Motor neuron (in vitro differentiated cells): ENCODE measurements at regions of chr10 and their contacts with region 1.

Region 1: DNA sequence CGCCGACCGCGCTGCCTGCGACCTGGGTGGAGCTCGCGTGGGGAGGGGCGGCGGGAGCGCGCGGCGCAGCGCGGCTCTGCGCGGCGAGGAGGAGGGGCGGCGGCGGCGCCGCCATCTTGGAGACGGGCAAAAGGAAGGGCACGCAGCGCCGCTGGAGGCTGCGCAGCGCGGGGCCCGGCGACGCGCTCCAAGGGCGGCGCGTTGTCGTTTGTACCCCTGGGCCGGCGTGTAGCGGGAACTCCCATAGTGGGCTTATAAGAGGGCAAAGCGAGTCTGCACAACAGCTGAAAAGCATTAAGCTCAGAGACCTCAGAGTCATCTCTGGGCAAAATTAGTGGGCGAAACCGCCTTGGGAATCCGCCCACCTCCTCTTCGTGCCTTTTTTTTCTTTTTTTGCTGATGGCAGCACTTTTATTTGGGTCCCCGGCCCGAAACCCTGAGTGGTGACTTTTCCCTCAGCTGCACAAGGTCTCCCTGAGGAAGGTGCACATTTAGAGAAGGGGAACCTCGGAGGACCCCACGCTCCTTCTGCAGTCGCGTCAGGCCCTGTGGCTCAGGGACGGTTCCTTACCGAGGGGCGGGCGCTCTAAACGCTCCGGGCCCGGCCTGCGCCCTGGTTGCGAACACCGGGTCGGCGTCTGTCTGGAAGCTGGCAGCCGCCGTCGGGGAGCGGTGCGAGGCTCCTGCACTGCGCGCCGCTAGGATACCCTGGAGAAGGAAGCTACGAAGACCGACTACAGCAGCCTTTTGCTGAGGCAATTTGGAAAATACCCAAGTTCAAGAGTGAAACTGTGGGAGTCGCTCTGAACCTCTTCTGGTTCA is 428 bp upstream of the MCMBP start:
- ATAC-seq: peak; percentile 87 to 95 (median 93)
- H3K4me3 ChIP-seq: peak overlapping the region; percentile 74 to 89 (median 86)
- H3K27ac ChIP-seq: peak overlapping the region; percentile 76 to 88
- H3K4me1 ChIP-seq: peaks cover 11 to 25% of the 10 kb centered on the region in 2 donors

Region 2: DNA sequence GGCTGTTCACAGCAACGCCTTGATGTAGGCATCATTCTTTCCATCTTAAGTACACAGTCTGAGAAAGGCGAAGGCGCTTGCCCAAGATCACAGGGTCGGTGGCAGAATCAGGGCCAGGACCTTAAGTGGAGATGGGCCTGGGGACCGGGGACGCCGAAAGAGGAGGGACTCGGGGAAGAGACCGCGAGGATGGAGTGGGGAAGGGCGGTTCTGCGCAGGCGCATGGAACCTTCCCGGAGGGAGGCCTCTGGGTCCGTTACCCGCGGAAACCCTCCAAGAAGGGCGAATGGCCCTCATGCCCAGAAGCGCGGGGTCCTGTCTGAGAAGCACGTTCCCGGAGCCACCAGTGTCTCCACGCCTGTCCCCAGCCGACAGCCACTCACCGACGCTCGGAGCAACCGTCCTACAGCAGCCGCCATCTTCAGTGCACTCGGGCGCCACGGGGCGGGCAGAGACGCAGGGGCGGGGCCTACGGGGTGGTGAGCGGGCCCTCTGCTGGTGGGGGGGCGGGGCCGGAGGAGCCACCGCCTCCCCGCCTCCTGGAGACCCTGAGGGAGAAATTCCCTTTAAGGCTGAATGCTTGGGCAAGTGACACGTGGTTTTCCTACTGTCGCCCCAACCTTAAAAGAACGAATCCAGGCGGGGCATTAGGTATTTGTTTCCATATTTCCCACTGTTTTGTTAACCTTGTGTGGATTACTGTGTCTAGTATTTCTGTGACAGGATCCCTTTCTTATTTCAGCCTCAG is 694.5 kb before region 1 on chr10 and contains the start of gene PRDX3:
- in situ Hi-C with region 1: loop called in 2 of 9 experiments (anchors 25 kb)
- ATAC-seq: peak; percentile 95 to 98 (median 96)
- H3K4me3 ChIP-seq: peak within 1 kb of the TSS; percentile 83 to 100 (median 98)
- H3K27ac ChIP-seq: peak within 1 kb of the TSS; percentile 97 to 99
- H3K4me1 ChIP-seq: peaks cover 6 to 7% of the 10 kb centered on the region in 2 donors
- total RNA-seq, gene PRDX3: 78.5 to 191 (median 129) TPM

Region 3: DNA sequence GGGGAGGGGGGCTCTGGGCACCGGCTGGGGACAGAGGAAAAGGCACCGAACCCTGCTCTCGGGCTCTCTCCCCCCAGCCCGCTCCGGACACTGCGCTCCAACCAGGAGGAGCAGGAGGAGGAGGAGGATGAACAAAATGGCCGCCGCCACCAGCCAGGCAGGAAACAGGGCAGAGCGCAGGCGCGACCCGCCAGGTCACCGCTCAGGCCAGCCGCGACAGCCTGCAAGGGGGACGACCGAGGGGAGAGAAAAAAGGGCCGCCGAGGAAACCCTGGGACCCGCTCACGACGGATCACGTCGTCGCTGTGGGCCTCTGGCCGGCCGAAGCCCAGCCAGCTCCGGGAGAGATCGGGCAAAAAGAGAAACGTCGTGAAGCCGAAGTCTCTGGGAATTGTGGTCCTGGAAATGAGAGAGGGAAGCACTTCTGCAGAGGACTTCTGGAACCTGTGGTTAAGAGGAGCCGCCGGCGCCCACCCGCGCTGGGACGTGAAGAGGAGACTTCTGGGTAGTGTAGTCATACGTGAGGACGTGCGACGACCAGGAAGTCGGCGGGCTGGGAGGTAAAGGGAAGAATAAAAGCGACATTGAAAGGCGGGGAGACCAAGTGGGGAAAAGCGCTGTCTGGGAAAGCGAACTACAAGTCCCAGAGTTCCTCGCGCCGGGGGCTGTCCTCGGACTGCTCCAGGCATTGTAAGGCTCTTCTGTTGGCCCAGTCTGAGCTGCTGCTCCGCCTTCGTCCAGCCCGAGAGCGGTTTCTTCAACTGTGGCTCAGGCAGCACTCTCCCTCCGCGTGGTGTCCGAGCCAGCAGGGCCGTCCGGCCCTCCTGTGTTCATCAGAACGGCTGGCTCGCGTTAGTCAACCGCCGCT is 276.3 kb before region 1 on chr10 and contains the start of gene TIAL1:
- in situ Hi-C with region 1: loop called in 2 of 9 experiments (anchors 25 kb)
- ATAC-seq: peak; percentile 86 to 92 (median 90)
- H3K4me3 ChIP-seq: peak within 1 kb of the TSS; percentile 64 to 97 (median 81)
- H3K27ac ChIP-seq: peak within 1 kb of the TSS; percentile 97 to 99
- H3K4me1 ChIP-seq: peaks cover 23 to 32% of the 10 kb centered on the region in 2 donors
- total RNA-seq, gene TIAL1: 26.3 to 119 (median 44.0) TPM

Region 4: DNA sequence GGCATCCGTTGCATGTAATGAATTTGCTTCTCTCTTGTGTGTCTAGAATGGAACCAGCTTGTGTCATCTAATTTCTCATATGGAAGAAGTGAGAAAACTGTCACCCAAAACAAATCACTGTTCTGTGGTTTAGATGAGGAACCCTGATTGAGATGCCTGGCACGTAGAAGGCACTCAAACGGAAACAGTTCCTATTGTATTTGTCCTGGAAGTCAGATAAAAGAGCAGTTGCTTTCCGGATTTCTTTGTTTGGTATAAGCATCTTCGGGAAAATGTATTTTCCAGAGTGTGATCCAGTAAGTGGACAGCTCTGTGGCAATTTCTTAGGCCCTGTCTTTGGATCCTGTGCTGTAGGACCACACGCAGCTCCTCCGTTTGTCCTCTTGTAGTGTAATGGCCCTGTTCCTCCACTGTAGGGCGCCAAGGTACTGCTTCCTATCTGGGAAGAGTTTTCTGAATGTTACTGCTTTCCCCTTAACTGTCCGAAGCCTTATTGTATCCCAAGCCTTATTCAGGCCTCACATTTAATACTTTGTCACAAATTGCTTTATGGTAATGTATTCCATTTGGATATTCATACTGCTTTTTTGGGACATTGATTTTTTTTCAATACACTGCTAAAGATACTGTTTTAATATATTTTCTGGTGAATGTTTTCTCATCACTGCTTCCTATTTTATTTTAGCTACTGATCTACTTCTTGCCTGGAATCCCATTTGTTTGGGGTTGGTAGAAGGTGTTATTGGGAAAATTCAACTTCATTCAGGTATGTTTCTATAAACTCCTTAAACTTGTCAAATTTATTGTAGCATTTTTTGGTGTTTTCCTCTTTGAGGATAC is 122.5 kb before region 1 on chr10:
- in situ Hi-C with region 1: loop called in 1 of 9 experiments (anchors 25 kb)
- ATAC-seq: peak; percentile 92 to 98 (median 95)
- H3K4me3 ChIP-seq: peak overlapping the region in 2 of 5 donors; percentile 9 to 10
- H3K27ac ChIP-seq: peak overlapping the region in 1 of 2 donors; percentile 17
- H3K4me1 ChIP-seq: peaks cover 5 to 22% of the 10 kb centered on the region in 2 donors

Region 5: GRCh38 chr10:119969609-119970008 is 96.5 kb after region 1 on chr10:
- in situ Hi-C with region 1: no loop called
- ATAC-seq: no peak
- H3K4me3 ChIP-seq: no peak overlapping the region
- H3K27ac ChIP-seq: no peak overlapping the region
- H3K4me1 ChIP-seq: no peaks in the 10 kb centered on the region